ENCODE measurements at regions of chr12 and their contacts with region 1.

Region 1: GRCh38 chr12:69157023-69157655 is 82.2 kb upstream of the CPSF6 start:
- DNase-seq: peak; percentile 97
- H3K4me3 Mint-ChIP-seq: peak overlapping the region; percentile 28
- H3K27ac Mint-ChIP-seq: no peak overlapping the region
- H3K4me1 Mint-ChIP-seq: peaks cover 8% of the 10 kb centered on the region
- H3K27me3 Mint-ChIP-seq: no peaks in the 10 kb centered on the region
- CTCF ChIP-seq: peak; percentile 88

Region 2: GRCh38 chr12:68866950-68867349 is 290.2 kb before region 1 on chr12:
- CTCF ChIA-PET with region 1: no interaction called
- intact Hi-C with region 1: loop called (anchors 2 kb)
- DNase-seq: no peak
- H3K4me3 Mint-ChIP-seq: no peak overlapping the region
- H3K27ac Mint-ChIP-seq: no peak overlapping the region
- H3K4me1 Mint-ChIP-seq: no peaks in the 10 kb centered on the region
- H3K27me3 Mint-ChIP-seq: no peaks in the 10 kb centered on the region
- CTCF ChIP-seq: no peak

Region 3: GRCh38 chr12:68899251-68899771 is 257.8 kb before region 1 on chr12:
- CTCF ChIA-PET with region 1: no interaction called
- intact Hi-C with region 1: loop called (anchors 2 kb)
- DNase-seq: peak; percentile 79
- H3K4me3 Mint-ChIP-seq: no peak overlapping the region
- H3K27ac Mint-ChIP-seq: no peak overlapping the region
- H3K4me1 Mint-ChIP-seq: peaks cover 23% of the 10 kb centered on the region
- H3K27me3 Mint-ChIP-seq: no peaks in the 10 kb centered on the region
- CTCF ChIP-seq: peak; percentile 45

Region 4: GRCh38 chr12:69196302-69197288 is 39.5 kb after region 1 on chr12:
- CTCF ChIA-PET with region 1: no interaction called
- intact Hi-C with region 1: loop called (anchors 5 kb)
- DNase-seq: peak; percentile 41
- H3K4me3 Mint-ChIP-seq: no peak overlapping the region
- H3K27ac Mint-ChIP-seq: no peak overlapping the region
- H3K4me1 Mint-ChIP-seq: no peaks in the 10 kb centered on the region
- H3K27me3 Mint-ChIP-seq: peaks cover 22% of the 10 kb centered on the region
- CTCF ChIP-seq: peak; percentile 20

Region 5: DNA sequence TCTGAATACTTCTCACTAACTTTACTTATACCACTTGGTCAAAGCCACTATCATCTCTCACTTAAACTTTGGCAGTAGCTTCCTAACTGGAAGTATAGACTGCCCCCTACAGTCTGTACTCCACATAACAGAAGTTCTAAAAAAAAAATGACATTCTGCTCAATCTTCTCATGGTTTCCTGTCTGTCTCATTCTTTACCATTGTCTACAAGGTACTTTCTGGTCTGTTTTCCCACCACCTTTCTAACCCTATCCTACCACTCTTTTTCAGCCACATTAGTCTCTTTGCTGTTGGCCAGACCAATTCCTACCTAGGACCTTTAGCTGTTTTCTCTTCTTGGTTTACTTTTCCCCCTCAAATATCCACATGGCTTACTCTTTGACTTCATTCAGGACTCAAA is 96.9 kb after region 1 on chr12:
- CTCF ChIA-PET with region 1: interaction called, 8 read pairs
- intact Hi-C with region 1: loop called (anchors 1 kb)
- DNase-seq: no peak
- H3K4me3 Mint-ChIP-seq: no peak overlapping the region
- H3K27ac Mint-ChIP-seq: peak overlapping the region; percentile 19
- H3K4me1 Mint-ChIP-seq: peaks cover 36% of the 10 kb centered on the region
- H3K27me3 Mint-ChIP-seq: no peaks in the 10 kb centered on the region
- CTCF ChIP-seq: peak; percentile 41